ENCODE measurements at regions of chr2 and their contacts with region 1.

Region 1: DNA sequence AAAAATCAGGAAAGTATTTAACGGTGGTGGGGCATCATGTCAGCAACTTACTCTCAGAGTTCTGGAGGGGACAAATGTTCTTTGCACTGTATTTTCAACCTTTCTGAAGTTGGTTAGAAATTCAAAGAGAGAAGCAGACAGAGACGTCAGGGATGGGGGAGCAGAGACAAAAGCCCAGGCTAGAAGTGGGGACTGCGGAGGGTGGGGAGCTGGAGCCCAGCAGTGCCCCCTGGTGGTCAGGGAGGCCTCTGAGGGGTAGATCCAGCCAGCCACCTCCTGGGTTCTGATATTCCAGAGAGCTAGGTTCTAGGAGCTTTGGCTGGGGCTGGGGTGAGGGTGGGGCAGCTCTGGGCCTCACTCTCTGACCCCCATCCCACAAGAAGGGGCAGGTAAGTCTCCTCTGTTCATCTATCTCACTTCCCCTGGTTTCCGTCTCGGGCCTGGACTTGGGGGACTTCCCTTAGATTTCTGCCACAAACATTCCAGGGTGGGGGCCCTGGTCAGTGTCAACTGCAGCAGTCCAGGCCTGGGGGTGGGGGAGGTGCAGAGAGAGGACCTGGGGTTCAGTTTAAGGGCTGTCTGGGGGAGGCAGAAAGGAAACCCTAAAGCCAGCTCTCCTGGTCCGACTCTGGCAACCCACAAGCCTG is 8.9 kb downstream of the TNS1 start:
- DNase-seq: peak in 4 of 5 donors; percentile 52 to 76 (median 66)
- H3K4me3 ChIP-seq: no peak overlapping the region
- H3K27ac ChIP-seq: no peak overlapping the region
- H3K4me1 ChIP-seq: peaks cover 0 to 15% (median 6%) of the 10 kb centered on the region in 3 donors
- H3K27me3 ChIP-seq: no peaks in the 10 kb centered on the region
- CTCF ChIP-seq: peak; percentile 63

Region 2: GRCh38 chr2:217685255-217685605 is 308.7 kb before region 1 on chr2:
- intact Hi-C with region 1: no loop called
- DNase-seq: peak in 1 of 5 donors; percentile 37
- H3K4me3 ChIP-seq: no peak overlapping the region
- H3K27ac ChIP-seq: no peak overlapping the region
- H3K4me1 ChIP-seq: peaks cover 0 to 9% (median 3%) of the 10 kb centered on the region in 3 donors
- H3K27me3 ChIP-seq: no peaks in the 10 kb centered on the region
- CTCF ChIP-seq: no peak

Region 3: GRCh38 chr2:217785544-217786045 is 208.3 kb before region 1 on chr2:
- intact Hi-C with region 1: loop called (anchors 5 kb)
- DNase-seq: peak; percentile 80 to 88 (median 85)
- H3K4me3 ChIP-seq: no peak overlapping the region
- H3K27ac ChIP-seq: no peak overlapping the region
- H3K4me1 ChIP-seq: peaks cover 0 to 2% (median 0%) of the 10 kb centered on the region in 3 donors
- H3K27me3 ChIP-seq: no peaks in the 10 kb centered on the region
- CTCF ChIP-seq: peak; percentile 98

Region 4: GRCh38 chr2:217899231-217900009 is 94.5 kb before region 1 on chr2:
- intact Hi-C with region 1: loop called (anchors 10 kb)
- DNase-seq: peak in 3 of 5 donors; percentile 55 to 92 (median 56)
- H3K4me3 ChIP-seq: no peak overlapping the region
- H3K27ac ChIP-seq: peak overlapping the region; percentile 68 to 71
- H3K4me1 ChIP-seq: peaks cover 6 to 77% (median 63%) of the 10 kb centered on the region in 3 donors
- H3K27me3 ChIP-seq: no peaks in the 10 kb centered on the region
- CTCF ChIP-seq: peak; percentile 79

Measured in kidney (tissue), 22 donors.